CD14-positive monocyte (primary cell): ENCODE measurements at regions of chr2 and their contacts with region 1.

Region 1: DNA sequence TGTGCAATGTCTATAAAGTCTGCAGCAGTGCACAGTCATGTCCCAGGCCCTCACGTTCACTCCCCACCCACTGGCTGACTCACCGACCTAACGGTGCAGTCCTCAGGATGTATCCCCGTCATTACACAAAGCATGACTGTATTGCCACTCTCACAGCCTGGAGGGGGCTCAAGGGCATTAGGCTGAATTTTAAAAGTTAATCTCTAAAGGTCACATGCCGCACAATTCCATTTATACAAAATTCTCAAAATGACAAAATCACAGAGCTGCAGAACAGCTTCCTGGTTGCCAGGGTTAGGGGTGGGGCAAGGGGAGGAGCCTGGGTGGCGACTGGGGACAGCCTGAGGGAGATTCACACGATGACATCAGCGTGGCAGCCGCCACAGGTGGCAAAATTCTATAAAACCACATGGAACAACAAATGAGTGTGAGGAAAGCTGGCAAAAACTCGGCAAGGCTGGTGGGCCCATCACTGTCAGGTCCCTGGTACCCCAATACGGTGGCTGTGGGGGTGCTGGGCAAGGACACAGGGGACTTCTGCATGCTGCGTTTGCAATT is 97.6 kb downstream of the NDUFA10 start:
- DNase-seq: peak; percentile 94 to 98 (median 97)
- H3K4me3 ChIP-seq: peak overlapping the region in 2 of 3 experiments; percentile 11 to 43
- H3K4me3 Mint-ChIP-seq: peak overlapping the region; percentile 55 to 81
- H3K27ac ChIP-seq: peak overlapping the region; percentile 77 to 91
- H3K27ac Mint-ChIP-seq: peak overlapping the region; percentile 86 to 96 (median 93)
- H3K4me1 ChIP-seq: peaks cover 17 to 26% of the 10 kb centered on the region in 2 donors
- H3K4me1 Mint-ChIP-seq: peaks cover 25% of the 10 kb centered on the region
- H3K27me3 ChIP-seq: peaks cover 0 to 3% of the 10 kb centered on the region in 2 donors
- H3K27me3 Mint-ChIP-seq: peaks cover 9 to 32% (median 23%) of the 10 kb centered on the region in 3 donors
- CTCF ChIP-seq: no peak

Region 2: DNA sequence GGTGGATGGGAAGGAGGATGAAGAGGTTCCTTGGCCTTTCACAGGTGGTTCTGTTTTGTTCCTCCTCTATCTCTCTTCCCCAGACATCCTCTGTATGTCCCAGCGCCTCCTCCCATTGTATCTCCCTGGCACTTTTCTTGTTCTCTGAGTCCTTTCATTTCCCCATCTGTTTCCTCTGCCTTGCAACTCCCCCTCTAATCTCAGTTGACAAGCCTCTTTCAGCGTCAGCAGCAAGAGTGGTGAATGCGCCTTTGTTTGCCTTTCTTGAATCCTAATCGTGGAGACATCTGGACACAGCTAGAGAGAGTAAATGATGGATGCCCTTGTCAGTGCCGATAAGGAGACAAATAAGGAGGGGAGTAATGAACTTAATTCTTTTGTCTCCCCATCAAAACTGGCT is 69.3 kb before region 1 on chr2:
- intact Hi-C with region 1: no loop called
- DNase-seq: no peak
- H3K4me3 ChIP-seq: no peak overlapping the region
- H3K4me3 Mint-ChIP-seq: peak overlapping the region in 1 of 2 donors; percentile 40
- H3K27ac ChIP-seq: no peak overlapping the region
- H3K27ac Mint-ChIP-seq: peak overlapping the region in 1 of 7 donors; percentile 38
- H3K4me1 ChIP-seq: no peaks in the 10 kb centered on the region
- H3K4me1 Mint-ChIP-seq: peaks cover 8% of the 10 kb centered on the region
- H3K27me3 ChIP-seq: peaks cover 7% of the 10 kb centered on the region in 2 donors
- H3K27me3 Mint-ChIP-seq: peaks cover 11 to 38% (median 31%) of the 10 kb centered on the region in 3 donors
- CTCF ChIP-seq: no peak

Region 3: DNA sequence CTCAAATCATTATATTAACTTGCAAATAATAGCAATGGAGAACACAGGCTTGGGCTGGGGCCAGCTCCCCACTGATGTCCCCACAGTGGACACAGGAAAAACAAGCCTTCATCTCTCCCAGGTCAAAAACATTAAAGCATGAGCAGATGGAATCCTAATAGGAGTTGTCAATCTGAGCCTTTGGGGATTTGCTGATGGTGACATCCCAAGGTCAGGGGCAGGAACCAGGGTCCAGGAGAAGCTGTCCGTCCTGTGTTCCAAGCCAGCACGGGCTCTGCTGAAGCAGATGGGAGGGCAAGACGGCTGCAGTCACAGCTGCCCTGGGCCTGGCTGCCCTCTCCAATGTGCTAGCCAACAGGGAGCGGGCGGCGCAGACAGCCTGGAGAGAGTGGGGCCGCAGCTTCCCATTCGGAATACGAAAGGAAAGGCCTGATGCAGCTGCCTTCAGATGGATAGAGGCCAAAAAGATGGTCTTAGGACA is 37.8 kb before region 1 on chr2:
- intact Hi-C with region 1: no loop called
- DNase-seq: no peak
- H3K4me3 ChIP-seq: no peak overlapping the region
- H3K4me3 Mint-ChIP-seq: peak overlapping the region in 1 of 2 donors; percentile 34
- H3K27ac ChIP-seq: no peak overlapping the region
- H3K27ac Mint-ChIP-seq: no peak overlapping the region
- H3K4me1 ChIP-seq: peaks cover 15 to 17% of the 10 kb centered on the region in 2 donors
- H3K4me1 Mint-ChIP-seq: peaks cover 26% of the 10 kb centered on the region
- H3K27me3 ChIP-seq: no peaks in the 10 kb centered on the region
- H3K27me3 Mint-ChIP-seq: peaks cover 5 to 16% (median 12%) of the 10 kb centered on the region in 3 donors
- CTCF ChIP-seq: no peak

Region 4: GRCh38 chr2:239910851-239911640 is 16.5 kb before region 1 on chr2:
- intact Hi-C with region 1: loop called in 1 of 2 experiments (anchors 2 kb)
- DNase-seq: peak; percentile 94 to 96 (median 96)
- H3K4me3 ChIP-seq: peak overlapping the region; percentile 3 to 66 (median 21)
- H3K4me3 Mint-ChIP-seq: peak overlapping the region; percentile 63 to 85
- H3K27ac ChIP-seq: peak overlapping the region; percentile 99 to 100
- H3K27ac Mint-ChIP-seq: peak overlapping the region in 1 of 7 donors; percentile 99
- H3K4me1 ChIP-seq: peaks cover 59 to 64% of the 10 kb centered on the region in 2 donors
- H3K4me1 Mint-ChIP-seq: peaks cover 37% of the 10 kb centered on the region
- H3K27me3 ChIP-seq: no peaks in the 10 kb centered on the region
- H3K27me3 Mint-ChIP-seq: peaks cover 0 to 3% (median 0%) of the 10 kb centered on the region in 3 donors
- CTCF ChIP-seq: no peak